ENCODE measurements at regions of chrX and their contacts with region 1.

Region 1: GRCh38 chrX:20530406-20530921 is 263.8 kb upstream of the RPS6KA3 start:
- DNase-seq: peak; percentile 59
- H3K4me3 Mint-ChIP-seq: no peak overlapping the region
- H3K27ac Mint-ChIP-seq: no peak overlapping the region
- H3K4me1 Mint-ChIP-seq: peaks cover 4% of the 10 kb centered on the region
- H3K27me3 Mint-ChIP-seq: peaks cover 24% of the 10 kb centered on the region

Region 2: DNA sequence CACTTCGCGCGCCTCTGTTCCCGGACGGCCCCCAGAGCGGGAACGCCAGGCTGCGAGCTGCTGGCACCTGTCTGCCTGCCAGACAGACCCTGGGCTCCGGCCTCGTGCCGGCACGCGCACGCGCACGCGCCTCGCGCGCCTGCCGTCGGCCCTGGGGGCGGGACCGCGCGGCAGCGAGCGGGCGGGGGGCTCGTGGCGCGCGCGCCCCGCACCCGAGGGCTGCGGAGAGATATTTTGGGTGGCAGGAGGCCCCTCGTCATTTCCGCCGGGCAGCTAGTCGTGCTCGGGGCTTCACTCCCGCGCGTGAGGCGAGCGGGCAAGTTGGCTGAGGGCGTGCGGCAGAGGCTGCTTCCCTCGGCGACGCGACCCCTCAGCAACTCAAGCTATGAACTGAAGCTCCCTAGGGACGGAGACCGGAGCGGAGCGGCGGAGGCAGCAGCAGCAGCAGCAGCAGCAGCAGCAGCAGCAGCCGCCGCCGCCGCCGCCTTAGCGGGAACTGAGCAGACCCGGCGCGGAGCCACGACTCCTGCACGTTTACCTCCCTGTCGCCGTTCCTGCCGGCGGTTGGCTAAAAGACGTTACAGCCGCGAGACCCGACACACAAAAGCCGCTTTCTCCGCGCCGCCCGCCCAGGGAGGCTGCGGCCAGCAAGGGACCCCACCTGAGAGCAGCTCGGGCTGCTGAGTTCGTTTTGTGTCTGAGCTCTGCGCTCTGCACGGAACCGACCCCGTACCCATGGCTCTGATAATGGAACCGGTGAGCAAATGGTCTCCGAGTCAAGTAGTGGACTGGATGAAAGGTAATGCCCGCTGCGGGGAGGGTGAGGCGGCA is 843.9 kb after region 1 on chrX and contains the start of gene CNKSR2:
- CTCF ChIA-PET with region 1: no interaction called
- POLR2A ChIA-PET with region 1: no interaction called
- intact Hi-C with region 1: loop called (anchors 5 kb)
- DNase-seq: peak; percentile 70
- H3K4me3 Mint-ChIP-seq: peak within 1 kb of the TSS; percentile 84
- H3K27ac Mint-ChIP-seq: no peak within 1 kb of the TSS
- H3K4me1 Mint-ChIP-seq: peaks cover 25% of the 10 kb centered on the region
- H3K27me3 Mint-ChIP-seq: no peaks in the 10 kb centered on the region
- total RNA-seq, gene CNKSR2: 3.6 to 3.7 TPM

Region 3: GRCh38 chrX:21479695-21480270 is 949.3 kb after region 1 on chrX:
- CTCF ChIA-PET with region 1: interaction called, 14 read pairs
- POLR2A ChIA-PET with region 1: no interaction called
- intact Hi-C with region 1: loop called (anchors 2 kb)
- DNase-seq: no peak
- H3K4me3 Mint-ChIP-seq: no peak overlapping the region
- H3K27ac Mint-ChIP-seq: no peak overlapping the region
- H3K4me1 Mint-ChIP-seq: no peaks in the 10 kb centered on the region
- H3K27me3 Mint-ChIP-seq: no peaks in the 10 kb centered on the region

Region 4: DNA sequence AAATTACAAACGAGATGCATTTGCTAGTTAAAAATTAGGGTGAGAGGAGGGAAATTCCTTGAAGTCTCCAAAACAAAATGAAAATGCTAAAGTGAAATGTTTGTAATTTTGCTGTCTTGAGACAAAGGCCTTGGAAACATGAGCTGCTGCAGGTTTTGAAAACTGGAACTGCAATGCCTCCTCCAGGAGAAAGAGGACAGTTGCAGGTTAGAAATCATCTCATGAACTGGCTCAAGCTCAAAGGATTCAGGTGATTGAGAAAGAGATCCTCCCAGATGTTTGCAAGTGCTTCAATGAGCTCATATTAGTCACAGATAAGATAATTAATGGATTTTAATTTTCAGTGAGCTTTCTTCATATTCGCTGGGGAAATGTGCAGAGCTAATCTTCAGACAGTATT is 1195.0 kb after region 1 on chrX:
- CTCF ChIA-PET with region 1: interaction called, 3 read pairs
- POLR2A ChIA-PET with region 1: no interaction called
- intact Hi-C with region 1: loop called (anchors 5 kb)
- DNase-seq: no peak
- H3K4me3 Mint-ChIP-seq: no peak overlapping the region
- H3K27ac Mint-ChIP-seq: no peak overlapping the region
- H3K4me1 Mint-ChIP-seq: no peaks in the 10 kb centered on the region
- H3K27me3 Mint-ChIP-seq: peaks cover 3% of the 10 kb centered on the region

Region 5: GRCh38 chrX:21745756-21746155 is 1215.3 kb after region 1 on chrX:
- CTCF ChIA-PET with region 1: interaction called, 7 read pairs
- POLR2A ChIA-PET with region 1: no interaction called
- intact Hi-C with region 1: loop called (anchors 1 kb)
- DNase-seq: peak; percentile 48
- H3K4me3 Mint-ChIP-seq: no peak overlapping the region
- H3K27ac Mint-ChIP-seq: no peak overlapping the region
- H3K4me1 Mint-ChIP-seq: no peaks in the 10 kb centered on the region
- H3K27me3 Mint-ChIP-seq: peaks cover 1% of the 10 kb centered on the region

Measured in activated CD4-positive, alpha-beta memory T cell treated with anti-CD3 and anti-CD28 coated beads for 36 hours (primary cell).